PC-9 (cell line): ENCODE measurements at regions of chr9 and their contacts with region 1.

Region 1: DNA sequence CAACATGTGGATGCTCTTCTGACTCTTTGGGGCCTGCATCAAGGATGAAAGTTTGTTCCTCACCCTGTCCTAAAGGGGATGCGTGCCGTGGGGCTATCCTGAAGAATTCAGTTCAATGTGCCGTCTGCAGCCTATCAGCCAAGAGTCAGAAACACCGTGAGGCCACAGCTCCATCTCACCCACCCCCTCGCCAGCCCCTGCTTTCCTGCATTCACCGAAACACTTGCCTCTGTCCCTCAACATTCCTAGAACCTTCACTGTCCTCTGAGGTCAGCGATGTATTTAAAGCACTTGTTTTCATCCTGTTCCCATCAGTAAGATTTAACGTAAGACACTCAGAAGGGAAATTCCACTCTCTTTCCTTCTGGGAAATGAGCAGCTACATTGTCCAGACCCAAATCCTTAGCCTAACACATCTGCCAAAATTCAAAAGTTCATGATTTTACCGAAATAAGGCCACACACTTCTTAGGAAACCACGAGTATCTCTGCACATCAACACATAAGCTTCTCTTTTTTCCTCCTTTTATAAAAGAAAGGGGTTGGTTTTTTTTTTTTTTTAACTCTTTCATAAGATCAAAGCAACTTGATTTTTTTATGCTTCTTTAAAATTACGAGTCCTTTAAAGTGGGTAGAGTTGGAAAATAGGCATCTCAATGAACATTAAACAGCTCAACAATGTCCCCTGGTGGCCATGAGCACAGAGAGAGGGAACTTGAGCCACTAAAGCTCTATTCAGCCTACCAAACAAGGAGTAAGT is 100.7 kb downstream of the SUSD1 start:
- DNase-seq: peak; percentile 62 to 78
- H3K4me3 ChIP-seq: no peak overlapping the region
- H3K27ac ChIP-seq: peak overlapping the region; percentile 50
- H3K4me1 ChIP-seq: peaks cover 23% of the 10 kb centered on the region
- H3K27me3 ChIP-seq: no peaks in the 10 kb centered on the region
- CTCF ChIP-seq: peak; percentile 94

Region 2: GRCh38 chr9:111597817-111598729 is 476.4 kb before region 1 on chr9:
- CTCF ChIA-PET with region 1: interaction called, 4 read pairs
- POLR2A ChIA-PET with region 1: no interaction called
- intact Hi-C with region 1: loop called (anchors 1 kb)
- DNase-seq: peak; percentile 66 to 73
- H3K4me3 ChIP-seq: peak overlapping the region; percentile 96
- H3K27ac ChIP-seq: peak overlapping the region; percentile 100
- H3K4me1 ChIP-seq: peaks cover 51% of the 10 kb centered on the region
- H3K27me3 ChIP-seq: no peaks in the 10 kb centered on the region
- CTCF ChIP-seq: peak; percentile 81

Region 3: GRCh38 chr9:111674319-111674718 is 400.1 kb before region 1 on chr9:
- CTCF ChIA-PET with region 1: no interaction called
- POLR2A ChIA-PET with region 1: interaction called, 12 read pairs
- intact Hi-C with region 1: no loop called
- DNase-seq: no peak
- H3K4me3 ChIP-seq: no peak overlapping the region
- H3K27ac ChIP-seq: no peak overlapping the region
- H3K4me1 ChIP-seq: no peaks in the 10 kb centered on the region
- H3K27me3 ChIP-seq: no peaks in the 10 kb centered on the region
- CTCF ChIP-seq: no peak

Region 4: GRCh38 chr9:111851566-111851965 is 222.9 kb before region 1 on chr9:
- CTCF ChIA-PET with region 1: interaction called, 8 read pairs
- POLR2A ChIA-PET with region 1: no interaction called
- intact Hi-C with region 1: loop called (anchors 2 kb)
- DNase-seq: peak; percentile 84 to 97
- H3K4me3 ChIP-seq: no peak overlapping the region
- H3K27ac ChIP-seq: peak overlapping the region; percentile 82
- H3K4me1 ChIP-seq: peaks cover 47% of the 10 kb centered on the region
- H3K27me3 ChIP-seq: no peaks in the 10 kb centered on the region
- CTCF ChIP-seq: no peak

Region 5: GRCh38 chr9:111914749-111915424 is 159.5 kb before region 1 on chr9:
- CTCF ChIA-PET with region 1: no interaction called
- POLR2A ChIA-PET with region 1: interaction called, 22 read pairs
- intact Hi-C with region 1: no loop called
- DNase-seq: no peak
- H3K4me3 ChIP-seq: no peak overlapping the region
- H3K27ac ChIP-seq: no peak overlapping the region
- H3K4me1 ChIP-seq: no peaks in the 10 kb centered on the region
- H3K27me3 ChIP-seq: no peaks in the 10 kb centered on the region
- CTCF ChIP-seq: no peak

Region 6: DNA sequence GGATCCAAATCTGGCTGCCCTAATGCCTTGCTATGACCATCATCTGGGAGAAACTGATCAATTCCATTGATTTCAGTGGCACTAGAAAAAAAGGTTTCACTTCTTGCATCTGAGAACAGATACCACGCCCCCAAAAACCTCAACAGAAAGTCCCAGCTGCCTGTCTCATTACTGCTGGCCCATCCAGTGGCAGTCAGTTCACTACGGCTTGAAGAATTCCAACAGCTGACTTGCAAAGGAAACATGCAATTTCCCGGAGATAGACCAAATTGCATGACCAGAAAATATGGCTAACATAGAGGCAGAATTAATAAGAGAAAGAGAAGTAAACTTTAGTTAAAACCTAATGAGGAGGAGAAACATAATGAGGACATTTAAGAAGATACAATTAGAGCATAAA is 129.2 kb before region 1 on chr9:
- CTCF ChIA-PET with region 1: no interaction called
- POLR2A ChIA-PET with region 1: no interaction called
- intact Hi-C with region 1: no loop called
- DNase-seq: no peak
- H3K4me3 ChIP-seq: no peak overlapping the region
- H3K27ac ChIP-seq: no peak overlapping the region
- H3K4me1 ChIP-seq: no peaks in the 10 kb centered on the region; the same call in 1 of the 2 replicates
- H3K27me3 ChIP-seq: no peaks in the 10 kb centered on the region
- CTCF ChIP-seq: no peak

Region 7: GRCh38 chr9:112029921-112030444 is 44.4 kb before region 1 on chr9:
- CTCF ChIA-PET with region 1: interaction called, 3 read pairs
- POLR2A ChIA-PET with region 1: interaction called, 4 read pairs
- intact Hi-C with region 1: loop called (anchors 1 kb)
- DNase-seq: peak; percentile 83 to 99
- H3K4me3 ChIP-seq: 0 out of 2 replicates have a peak overlapping the region, but pooled peaks have one; percentile 15
- H3K27ac ChIP-seq: peak overlapping the region; percentile 83
- H3K4me1 ChIP-seq: peaks cover 37% of the 10 kb centered on the region
- H3K27me3 ChIP-seq: no peaks in the 10 kb centered on the region
- CTCF ChIP-seq: no peak

Region 8: GRCh38 chr9:112051812-112052211 is 22.6 kb before region 1 on chr9:
- CTCF ChIA-PET with region 1: no interaction called
- POLR2A ChIA-PET with region 1: no interaction called
- intact Hi-C with region 1: no loop called
- DNase-seq: no peak
- H3K4me3 ChIP-seq: no peak overlapping the region
- H3K27ac ChIP-seq: no peak overlapping the region
- H3K4me1 ChIP-seq: peaks cover 9% of the 10 kb centered on the region; the same call in 1 of the 2 replicates
- H3K27me3 ChIP-seq: no peaks in the 10 kb centered on the region
- CTCF ChIP-seq: no peak

Region 9: GRCh38 chr9:112757282-112757883 is 683.0 kb after region 1 on chr9:
- CTCF ChIA-PET with region 1: no interaction called
- POLR2A ChIA-PET with region 1: interaction called, 17 read pairs
- intact Hi-C with region 1: no loop called
- DNase-seq: peak; percentile 39 to 69
- H3K4me3 ChIP-seq: peak overlapping the region; percentile 17; the same call in 1 of the 2 replicates
- H3K27ac ChIP-seq: peak overlapping the region; percentile 58
- H3K4me1 ChIP-seq: peaks cover 59% of the 10 kb centered on the region
- H3K27me3 ChIP-seq: no peaks in the 10 kb centered on the region
- CTCF ChIP-seq: no peak